Posterior vena cava (tissue), 2 donors: ENCODE measurements at regions of chr5 and their contacts with region 1.

Region 1: DNA sequence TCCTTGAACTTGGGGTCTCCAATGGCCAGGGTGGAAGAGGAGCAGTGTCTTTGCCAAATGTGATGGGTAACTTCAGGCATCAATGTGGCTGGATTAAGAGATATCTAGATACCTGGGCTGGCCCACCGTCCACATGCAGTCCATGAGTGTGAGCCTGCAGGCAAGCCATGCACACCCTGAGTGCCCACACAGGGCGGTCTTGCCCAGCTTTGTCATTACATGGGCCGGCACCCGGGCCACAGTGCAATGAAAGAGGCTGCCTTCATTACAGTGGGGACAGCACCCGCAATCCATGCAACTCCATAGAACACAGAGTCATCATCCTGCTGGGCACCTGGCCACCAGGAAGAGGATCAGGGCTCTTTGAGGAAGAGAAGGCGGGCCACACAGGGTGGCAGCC is 263.8 kb upstream of the IRX1 start:
- DNase-seq: no peak

Region 2: GRCh38 chr5:2919310-2920018 is 412.4 kb before region 1 on chr5:
- intact Hi-C with region 1: loop called in 1 of 2 experiments (anchors 5 kb)
- DNase-seq: no peak

Region 3: DNA sequence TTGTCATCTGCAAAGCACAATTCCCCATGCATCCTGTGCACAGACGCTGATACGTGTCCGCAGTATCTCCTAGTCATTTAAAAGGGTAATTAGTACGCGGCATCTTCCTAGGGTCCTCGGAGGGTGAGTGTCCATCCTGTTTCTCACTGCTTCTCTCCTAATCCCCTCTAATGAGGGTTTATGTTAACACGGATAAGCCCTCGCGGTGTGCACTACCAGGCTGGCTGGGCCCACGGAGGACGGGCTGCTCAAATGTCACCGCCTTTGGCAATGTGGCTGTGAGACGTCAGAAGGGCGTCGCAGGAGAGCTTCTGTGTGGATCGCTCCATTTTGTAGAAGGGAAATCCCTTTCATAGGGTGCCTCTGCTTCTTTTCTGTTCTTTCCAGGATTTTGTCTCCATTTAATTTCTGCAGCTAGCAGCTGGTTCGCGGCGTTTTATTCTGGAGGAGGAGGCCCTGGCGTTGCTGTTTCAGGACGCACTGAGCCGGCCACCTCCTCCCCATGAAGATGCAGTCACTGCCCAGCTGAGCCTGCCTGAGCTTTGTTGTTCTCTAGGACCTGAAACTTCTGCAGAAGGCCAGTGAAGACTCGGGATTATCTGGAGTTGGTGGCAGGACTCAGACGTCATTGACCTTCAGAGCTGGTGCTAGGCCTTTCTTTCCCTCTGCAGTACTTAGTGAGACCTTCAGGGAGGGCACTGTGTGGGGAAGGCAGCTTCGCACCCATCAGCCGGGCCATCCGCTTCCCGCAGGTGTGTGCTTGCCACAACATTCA is 62.2 kb before region 1 on chr5:
- intact Hi-C with region 1: loop called in 1 of 2 experiments (anchors 2 kb)
- DNase-seq: no peak